Ovary (tissue), 10 donors: ENCODE measurements at regions of chr5 and their contacts with region 1.

Region 1: DNA sequence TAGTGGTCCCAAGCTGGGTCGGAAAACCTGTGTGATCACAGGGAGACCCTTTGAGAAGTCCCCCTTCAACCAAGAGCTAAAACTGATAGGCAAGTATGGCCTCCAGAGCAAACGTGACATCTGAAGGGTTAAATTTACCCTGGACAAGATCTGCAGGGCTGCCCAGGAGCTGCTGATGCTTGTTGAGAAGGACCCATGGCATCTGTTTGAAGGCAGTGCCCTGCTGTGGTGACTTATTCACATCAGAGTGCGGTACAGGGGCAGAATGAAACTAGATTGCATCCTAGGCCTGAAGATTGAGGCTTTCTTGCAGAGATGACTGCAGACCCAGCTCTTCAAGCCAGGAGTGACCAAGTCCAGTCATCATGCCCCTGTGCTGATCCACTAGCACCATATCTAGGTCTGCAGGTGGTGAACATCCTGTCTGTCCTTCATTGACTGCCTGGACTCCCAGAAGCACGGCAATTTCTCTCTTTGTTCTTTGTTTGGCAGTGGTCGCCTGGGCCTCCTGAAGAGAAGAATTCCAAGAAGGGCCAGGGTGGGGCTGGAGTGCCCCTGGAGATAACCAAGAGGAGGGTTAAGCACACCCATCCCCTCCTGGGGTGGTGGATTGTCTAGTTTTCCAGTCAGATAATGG is 25.7 kb upstream of the CHD1 start:
- DNase-seq: no peak
- H3K4me3 ChIP-seq: no peak overlapping the region
- H3K27ac ChIP-seq: no peak overlapping the region
- H3K4me1 ChIP-seq: no peaks in the 10 kb centered on the region
- H3K27me3 ChIP-seq: no peaks in the 10 kb centered on the region
- CTCF ChIP-seq: no peak
- EP300 ChIP-seq: no peak
- POLR2A ChIP-seq: no peak

Region 2: GRCh38 chr5:98917433-98917832 is 37.1 kb before region 1 on chr5:
- intact Hi-C with region 1: loop called in 1 of 4 experiments (anchors 1 kb)
- DNase-seq: no peak
- H3K4me3 ChIP-seq: no peak overlapping the region
- H3K27ac ChIP-seq: no peak overlapping the region
- H3K4me1 ChIP-seq: peaks cover 3% of the 10 kb centered on the region
- H3K27me3 ChIP-seq: no peaks in the 10 kb centered on the region
- CTCF ChIP-seq: no peak
- EP300 ChIP-seq: no peak
- POLR2A ChIP-seq: no peak

Region 3: GRCh38 chr5:99010294-99010693 is 55.8 kb after region 1 on chr5:
- intact Hi-C with region 1: loop called in 1 of 4 experiments (anchors 5 kb)
- DNase-seq: no peak
- H3K4me3 ChIP-seq: no peak overlapping the region
- H3K27ac ChIP-seq: no peak overlapping the region
- H3K4me1 ChIP-seq: no peaks in the 10 kb centered on the region
- H3K27me3 ChIP-seq: no peaks in the 10 kb centered on the region
- CTCF ChIP-seq: no peak
- EP300 ChIP-seq: no peak
- POLR2A ChIP-seq: no peak